ENCODE measurements at regions of chr17 and their contacts with region 1.

Region 1: DNA sequence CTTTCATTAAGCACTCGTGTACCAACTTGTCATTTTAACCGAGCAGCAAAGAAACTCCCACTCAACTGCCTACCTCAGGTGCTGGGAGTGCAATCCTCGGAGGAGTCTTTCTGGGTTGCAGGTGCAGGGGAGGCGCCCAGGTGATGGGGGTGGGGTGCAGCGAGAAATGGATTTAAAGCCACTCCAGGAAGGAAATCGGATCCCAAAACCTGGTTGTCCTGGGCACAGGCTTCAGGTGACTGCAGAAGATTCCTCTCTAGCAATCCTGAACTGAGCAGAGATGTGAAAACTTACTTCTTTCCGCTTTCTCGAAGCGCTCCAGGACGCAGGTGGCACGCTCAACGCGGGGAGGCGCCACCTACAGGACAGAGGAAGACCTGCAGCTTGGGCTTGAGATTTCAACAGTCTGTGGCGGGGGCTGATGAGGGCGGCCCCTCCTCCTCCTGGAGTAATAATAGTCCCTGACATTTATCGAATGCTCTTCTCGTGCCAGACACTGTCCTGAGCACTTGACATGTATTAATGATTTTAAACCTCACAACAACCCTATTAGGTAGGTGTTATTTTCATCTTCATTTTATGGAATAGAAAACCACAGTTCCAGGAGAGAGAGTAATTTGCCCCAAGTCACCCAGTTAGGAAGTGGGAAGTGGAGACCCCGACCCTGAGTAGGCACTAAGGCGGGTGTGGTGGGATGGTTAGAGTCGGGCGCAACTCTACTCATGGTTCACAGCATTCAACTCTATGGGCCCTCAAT is 27.2 kb upstream of the SKAP1 start:
- DNase-seq: no peak
- ATAC-seq: peak; percentile 97
- H3K4me3 ChIP-seq: peak overlapping the region; percentile 15 to 52; a peak in 3 of 4 replicates
- H3K27ac ChIP-seq: no peak overlapping the region
- H3K4me1 ChIP-seq: peaks cover 6% of the 10 kb centered on the region; the same call in 1 of the 2 replicates
- H3K27me3 ChIP-seq: no peaks in the 10 kb centered on the region; the same call in 1 of the 2 replicates
- CTCF ChIP-seq: peak; percentile 99

Region 2: GRCh38 chr17:48335858-48336500 is 121.3 kb before region 1 on chr17:
- CTCF ChIA-PET with region 1: no interaction called
- POLR2A ChIA-PET with region 1: no interaction called
- in situ Hi-C with region 1: no loop called
- intact Hi-C with region 1: loop called (anchors 10 kb)
- DNase-seq: peak; percentile 62
- ATAC-seq: peak; percentile 82
- H3K4me3 ChIP-seq: no peak overlapping the region
- H3K27ac ChIP-seq: peak overlapping the region; percentile 44; the same call in 1 of the 2 replicates
- H3K4me1 ChIP-seq: peaks cover 13% of the 10 kb centered on the region
- H3K27me3 ChIP-seq: no peaks in the 10 kb centered on the region
- CTCF ChIP-seq: peak; percentile 76; the same call in 1 of the 2 replicates

Region 3: GRCh38 chr17:48441231-48441711 is 16.0 kb before region 1 on chr17:
- CTCF ChIA-PET with region 1: interaction called, 14 read pairs
- POLR2A ChIA-PET with region 1: no interaction called
- in situ Hi-C with region 1: no loop called
- intact Hi-C with region 1: no loop called
- DNase-seq: no peak
- ATAC-seq: no peak
- H3K4me3 ChIP-seq: no peak overlapping the region
- H3K27ac ChIP-seq: no peak overlapping the region
- H3K4me1 ChIP-seq: no peaks in the 10 kb centered on the region
- H3K27me3 ChIP-seq: no peaks in the 10 kb centered on the region
- CTCF ChIP-seq: no peak

Region 4: DNA sequence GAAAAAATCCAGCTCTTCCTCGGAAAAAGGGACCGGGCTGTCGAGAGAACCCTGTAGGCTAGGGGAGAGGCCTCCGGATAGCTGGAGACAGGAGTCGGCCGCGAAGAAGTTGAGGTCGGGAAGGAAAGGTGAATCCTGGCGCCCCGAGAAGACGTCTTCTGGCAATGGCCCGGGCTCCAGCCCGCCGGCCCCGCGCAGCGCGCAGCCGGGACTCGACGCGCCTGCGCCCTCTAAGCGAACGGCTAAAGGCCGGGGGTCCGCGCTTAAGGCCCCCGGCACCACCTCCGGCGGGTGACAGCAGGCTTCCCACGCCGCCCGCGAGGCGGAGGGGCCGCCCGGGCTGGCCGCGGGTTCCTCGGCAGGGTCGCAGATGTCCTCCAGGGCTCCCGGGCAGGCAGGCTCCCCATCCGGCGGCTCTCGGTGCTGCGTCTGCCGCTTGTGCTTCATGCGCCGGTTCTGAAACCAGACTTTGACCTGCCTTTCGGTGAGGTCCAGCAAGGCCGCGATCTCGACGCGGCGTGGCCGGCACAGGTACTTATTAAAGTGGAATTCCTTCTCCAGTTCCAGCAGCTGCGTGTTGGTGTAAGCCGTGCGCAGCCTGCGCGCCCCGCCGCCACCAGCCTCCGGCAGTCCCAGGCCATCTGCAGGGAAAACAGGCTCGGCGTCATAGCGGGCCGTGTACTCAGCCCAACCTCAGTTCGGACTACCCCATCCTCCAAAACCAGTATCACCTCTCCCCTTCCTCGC is 86.0 kb after region 1 on chr17:
- CTCF ChIA-PET with region 1: interaction called, 11 read pairs
- POLR2A ChIA-PET with region 1: no interaction called
- in situ Hi-C with region 1: no loop called
- intact Hi-C with region 1: no loop called
- DNase-seq: no peak
- ATAC-seq: peak; percentile 59
- H3K4me3 ChIP-seq: peak overlapping the region; percentile 69 to 81
- H3K27ac ChIP-seq: peak overlapping the region; percentile 98
- H3K4me1 ChIP-seq: peaks cover 48% of the 10 kb centered on the region
- H3K27me3 ChIP-seq: no peaks in the 10 kb centered on the region
- CTCF ChIP-seq: no peak

Region 5: DNA sequence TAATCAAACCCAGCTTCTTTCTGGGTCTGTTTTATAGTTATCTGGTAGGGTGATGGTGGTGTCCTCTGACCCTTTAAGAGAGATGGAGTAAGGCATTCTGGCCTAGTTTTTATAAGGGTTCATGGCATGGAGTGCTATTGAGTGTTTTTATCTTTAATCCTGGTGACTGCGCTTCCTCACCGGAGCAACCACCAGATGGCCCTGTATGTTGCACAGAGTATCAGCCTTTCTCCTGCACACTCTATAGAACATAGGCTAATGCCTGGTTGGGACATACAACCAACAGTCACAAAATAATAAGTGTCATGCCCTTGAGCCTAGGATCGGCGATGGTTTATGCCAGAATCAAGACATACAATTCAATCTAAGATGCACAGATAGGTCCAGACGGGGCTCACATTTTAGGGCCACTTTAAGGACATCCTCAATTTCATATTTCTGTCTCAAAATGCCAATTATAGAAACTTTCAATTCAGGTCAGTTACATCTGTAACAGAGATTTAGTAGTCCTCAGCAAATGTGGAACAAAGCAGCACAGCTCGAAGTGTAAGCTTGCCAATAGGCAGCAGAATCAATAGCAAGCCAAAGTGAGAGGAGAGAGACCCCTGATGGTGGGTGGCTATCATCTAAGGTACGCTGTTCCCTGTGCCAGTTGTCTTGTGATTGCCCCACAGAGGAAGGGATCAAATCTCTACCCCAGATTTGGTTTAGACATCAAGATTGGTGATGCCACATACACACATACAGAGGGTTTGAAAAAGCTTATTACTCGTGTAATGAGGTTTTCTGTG is 206.1 kb after region 1 on chr17:
- CTCF ChIA-PET with region 1: no interaction called
- POLR2A ChIA-PET with region 1: no interaction called
- in situ Hi-C with region 1: no loop called
- intact Hi-C with region 1: no loop called
- DNase-seq: no peak
- ATAC-seq: peak; percentile 72
- H3K4me3 ChIP-seq: no peak overlapping the region
- H3K27ac ChIP-seq: no peak overlapping the region
- H3K4me1 ChIP-seq: no peaks in the 10 kb centered on the region
- H3K27me3 ChIP-seq: no peaks in the 10 kb centered on the region
- CTCF ChIP-seq: peak; percentile 65

Region 6: GRCh38 chr17:48804925-48805411 is 347.7 kb after region 1 on chr17:
- CTCF ChIA-PET with region 1: no interaction called
- POLR2A ChIA-PET with region 1: no interaction called
- in situ Hi-C with region 1: no loop called
- intact Hi-C with region 1: no loop called
- DNase-seq: no peak
- ATAC-seq: peak; percentile 97
- H3K4me3 ChIP-seq: no peak overlapping the region
- H3K27ac ChIP-seq: no peak overlapping the region
- H3K4me1 ChIP-seq: peaks cover 3% of the 10 kb centered on the region; the same call in 1 of the 2 replicates
- H3K27me3 ChIP-seq: no peaks in the 10 kb centered on the region; the same call in 1 of the 2 replicates
- CTCF ChIP-seq: peak; percentile 99

Measured in Panc1 (cell line).